ENCODE measurements at regions of chr2 and their contacts with region 1.

Region 1: DNA sequence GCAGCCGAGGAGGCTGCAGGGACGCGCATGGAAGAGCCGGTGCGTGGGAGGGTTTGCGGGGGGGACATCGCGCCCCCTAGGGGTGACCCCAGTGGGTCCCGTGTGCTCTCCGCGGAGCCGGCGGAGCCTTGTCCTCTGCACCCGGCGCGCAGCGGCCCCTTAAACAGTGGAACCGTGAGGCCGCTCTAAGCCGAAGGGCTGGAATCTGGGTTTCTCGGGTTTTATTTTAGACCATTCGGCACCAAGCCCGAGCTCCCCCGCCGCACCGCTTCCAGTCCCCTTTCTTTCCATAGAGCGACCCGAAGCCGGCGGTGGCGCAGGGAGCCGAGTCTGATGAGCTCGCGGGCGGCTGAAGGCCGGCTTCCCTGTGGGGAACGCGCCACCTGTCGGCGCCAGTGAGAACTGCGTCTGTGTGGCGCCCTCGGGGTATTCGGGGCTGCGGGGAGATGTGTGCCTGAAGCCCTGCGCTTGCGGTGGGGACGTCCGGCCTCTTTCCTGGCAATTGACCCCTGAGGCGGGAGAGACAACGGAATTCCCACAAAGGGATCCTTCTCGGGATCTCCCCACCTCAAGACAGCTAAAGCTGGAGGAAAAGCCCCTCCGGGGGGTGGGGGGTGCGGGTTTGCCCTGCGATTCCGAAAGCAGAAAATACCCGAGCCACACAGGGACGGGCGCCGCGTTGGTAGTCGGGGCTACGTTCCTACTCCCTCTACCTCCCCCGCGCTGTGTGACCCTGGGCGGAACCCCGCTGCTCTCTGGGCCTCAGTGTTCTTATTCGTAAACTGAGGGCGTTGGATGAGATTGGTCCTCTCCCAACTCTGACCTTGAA is 8.2 kb upstream of the EN1 start:
- DNase-seq: peak; percentile 77
- ATAC-seq: peak; percentile 90
- H3K4me3 Mint-ChIP-seq: peak overlapping the region; percentile 61
- H3K27ac Mint-ChIP-seq: peak overlapping the region; percentile 30
- H3K4me1 Mint-ChIP-seq: peaks cover 23% of the 10 kb centered on the region
- H3K27me3 Mint-ChIP-seq: peaks cover 65% of the 10 kb centered on the region
- CTCF ChIP-seq: peak; percentile 90

Region 2: DNA sequence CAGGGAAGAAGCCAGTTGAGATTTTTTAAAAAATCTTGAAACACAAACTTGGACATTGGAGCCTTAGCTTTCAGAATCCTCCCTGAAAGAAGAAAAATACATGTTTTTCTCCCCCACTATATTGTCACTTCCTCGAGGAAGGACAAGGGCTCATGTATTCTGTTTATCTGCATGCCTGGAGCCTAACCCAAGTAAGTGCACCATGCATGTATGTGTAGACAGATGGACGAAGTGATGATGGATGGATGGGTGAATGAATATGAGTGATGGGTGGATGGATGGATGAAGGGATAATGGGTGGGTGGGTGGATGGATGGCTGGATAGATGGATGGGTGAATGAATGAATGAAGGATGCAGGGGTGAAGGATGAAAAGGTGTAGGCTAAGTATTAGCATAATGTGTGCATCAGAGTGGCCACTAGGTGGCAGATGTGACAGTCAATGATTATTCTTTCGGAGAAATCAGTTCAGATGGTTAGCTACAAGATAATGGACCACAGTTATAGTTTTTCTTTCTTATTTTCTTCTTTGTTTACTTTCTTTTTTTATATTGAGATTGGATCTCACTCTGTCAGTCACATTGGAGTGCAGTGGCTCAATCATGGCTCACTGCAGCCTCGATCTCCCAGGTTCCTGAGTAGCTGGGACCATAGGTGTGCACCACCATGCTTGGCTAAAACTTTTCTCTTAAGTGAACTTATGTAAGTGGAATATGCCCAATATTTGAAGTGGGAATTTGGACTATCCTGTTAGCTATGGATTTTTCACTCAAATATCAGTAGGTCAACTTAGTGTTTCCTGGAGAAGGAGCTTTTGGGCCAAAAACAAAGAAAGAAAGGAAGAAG is 823.3 kb before region 1 on chr2:
- CTCF ChIA-PET with region 1: interaction called, 6 read pairs
- POLR2A ChIA-PET with region 1: no interaction called
- intact Hi-C with region 1: loop called (anchors 1 kb)
- DNase-seq: no peak
- ATAC-seq: peak; percentile 77
- H3K4me3 Mint-ChIP-seq: no peak overlapping the region
- H3K27ac Mint-ChIP-seq: no peak overlapping the region
- H3K4me1 Mint-ChIP-seq: peaks cover 14% of the 10 kb centered on the region
- H3K27me3 Mint-ChIP-seq: peaks cover 24% of the 10 kb centered on the region
- CTCF ChIP-seq: peak; percentile 24

Region 3: GRCh38 chr2:118202707-118203303 is 652.9 kb before region 1 on chr2:
- CTCF ChIA-PET with region 1: interaction called, 3 read pairs
- POLR2A ChIA-PET with region 1: no interaction called
- intact Hi-C with region 1: loop called (anchors 1 kb)
- DNase-seq: peak; percentile 19
- ATAC-seq: peak; percentile 88
- H3K4me3 Mint-ChIP-seq: no peak overlapping the region
- H3K27ac Mint-ChIP-seq: no peak overlapping the region
- H3K4me1 Mint-ChIP-seq: peaks cover 5% of the 10 kb centered on the region
- H3K27me3 Mint-ChIP-seq: peaks cover 20% of the 10 kb centered on the region
- CTCF ChIP-seq: peak; percentile 72

Region 4: DNA sequence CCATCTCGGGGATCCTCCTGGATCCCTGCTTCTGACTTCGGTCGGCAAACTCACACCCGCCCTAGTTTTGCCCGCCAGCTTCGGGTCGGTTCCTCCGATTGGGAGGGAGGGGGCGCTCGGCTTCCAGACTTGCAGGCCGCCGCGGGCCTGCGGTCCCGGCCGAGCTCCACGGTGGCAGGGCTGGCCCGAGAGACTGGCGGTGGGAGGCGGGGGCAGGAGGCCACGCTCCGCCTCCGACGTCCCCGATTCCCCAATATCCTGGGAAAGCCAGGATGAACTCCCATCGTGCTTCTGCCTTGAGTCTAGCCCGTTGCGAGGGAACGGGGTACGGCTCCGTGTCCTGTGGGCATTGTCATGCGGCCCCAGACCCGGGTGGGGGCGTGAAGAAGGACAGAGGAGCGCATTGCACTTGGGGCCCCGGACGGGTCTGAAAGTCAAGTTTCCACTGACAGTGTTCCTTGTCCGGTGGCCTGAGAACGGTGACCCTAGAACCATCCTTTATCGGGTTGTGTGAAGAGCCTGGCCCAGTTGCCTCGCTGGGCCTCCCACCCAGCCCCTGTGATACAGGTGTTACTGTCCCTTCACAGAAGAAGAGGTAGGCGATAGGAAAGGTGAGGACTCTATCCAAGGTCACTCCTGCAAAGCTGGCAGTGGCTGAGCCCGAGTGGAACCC is 1487.9 kb after region 1 on chr2:
- CTCF ChIA-PET with region 1: no interaction called
- POLR2A ChIA-PET with region 1: no interaction called
- intact Hi-C with region 1: loop called (anchors 10 kb)
- DNase-seq: peak; percentile 27
- ATAC-seq: peak; percentile 52
- H3K4me3 Mint-ChIP-seq: peak overlapping the region; percentile 55
- H3K27ac Mint-ChIP-seq: no peak overlapping the region
- H3K4me1 Mint-ChIP-seq: peaks cover 28% of the 10 kb centered on the region
- H3K27me3 Mint-ChIP-seq: peaks cover 58% of the 10 kb centered on the region
- CTCF ChIP-seq: no peak

Measured in activated B cell treated with CpG ODN at 0.5 μM for 24 hours (primary cell).